Posterior vena cava (tissue), 2 donors: ENCODE measurements at regions of chr3 and their contacts with region 1.

Region 1: DNA sequence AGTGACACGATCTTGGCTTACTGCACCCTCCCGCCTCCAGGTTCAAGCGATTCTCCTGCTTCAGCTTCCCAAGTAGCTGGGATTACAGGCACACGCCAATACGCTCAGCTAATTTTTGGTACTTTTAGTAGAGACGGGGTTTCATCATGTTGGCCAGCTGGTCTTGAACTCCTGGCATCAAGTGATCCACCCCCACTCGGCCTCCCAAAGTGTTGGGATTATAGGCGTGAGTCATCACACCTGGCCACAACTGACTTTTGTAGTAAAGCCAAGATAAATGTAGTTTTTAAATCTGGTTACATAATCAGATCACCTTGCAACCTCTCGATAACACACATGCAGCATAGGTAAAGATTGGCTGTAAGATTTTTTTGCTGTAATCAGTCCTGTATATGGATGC is 657.5 kb upstream of the DPPA4 start:
- DNase-seq: peak; percentile 62

Region 2: GRCh38 chr3:109548192-109548938 is 446.5 kb before region 1 on chr3:
- intact Hi-C with region 1: no loop called
- DNase-seq: no peak

Region 3: GRCh38 chr3:111369953-111370352 is 1375.1 kb after region 1 on chr3:
- intact Hi-C with region 1: loop called in 1 of 2 experiments (anchors 5 kb)
- DNase-seq: no peak